ENCODE measurements at regions of chr12 and their contacts with region 1.

Region 1: DNA sequence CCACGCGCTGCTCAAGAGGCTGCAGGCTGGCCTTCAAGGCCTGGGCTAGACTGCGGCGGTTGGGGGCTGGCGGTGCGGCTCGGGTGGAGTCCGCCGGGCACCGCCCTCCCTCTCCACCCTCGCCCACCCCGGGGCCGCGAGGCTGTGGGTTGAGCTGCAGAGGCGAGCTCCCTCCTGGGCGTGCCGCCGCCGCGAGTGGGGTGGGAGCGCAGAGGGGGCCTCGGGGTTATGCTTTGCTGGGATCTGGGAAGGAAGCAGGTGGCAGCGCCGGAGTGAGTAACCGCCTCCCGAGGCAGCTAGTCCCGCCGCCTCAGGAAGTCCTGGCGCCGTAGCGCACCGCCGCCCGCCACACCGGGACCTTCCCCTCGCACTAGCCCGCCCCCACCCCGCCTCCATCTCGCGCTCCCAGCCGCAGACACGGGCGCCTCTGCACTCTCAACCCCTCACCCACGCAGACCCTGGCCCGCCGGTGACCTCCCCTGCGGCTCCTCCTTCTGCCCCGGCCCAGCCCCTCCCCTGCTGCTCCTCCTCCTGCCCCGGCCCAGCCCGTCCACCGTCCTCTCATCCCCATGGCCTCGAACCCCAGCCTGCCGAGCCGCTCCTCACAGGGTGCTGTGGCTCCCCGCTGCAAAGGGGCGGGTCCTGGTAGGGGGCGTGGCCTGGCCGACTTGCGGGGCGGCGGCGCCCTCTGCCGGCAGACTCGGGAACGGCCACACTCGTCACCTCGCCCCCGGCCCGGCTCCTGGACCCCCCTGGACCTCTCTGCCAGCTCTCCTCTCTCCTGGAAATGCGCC is 16.6 kb downstream of the TAMALIN start:
- DNase-seq: peak; percentile 89
- H3K4me3 ChIP-seq: peak overlapping the region; percentile 2 to 69 (median 43)
- H3K27ac ChIP-seq: peak overlapping the region; percentile 94
- H3K4me1 ChIP-seq: peaks cover 31% of the 10 kb centered on the region
- H3K27me3 ChIP-seq: no peaks in the 10 kb centered on the region
- CTCF ChIP-seq: peak; percentile 98 to 99
- POLR2A ChIP-seq: peak; percentile 39

Region 2: DNA sequence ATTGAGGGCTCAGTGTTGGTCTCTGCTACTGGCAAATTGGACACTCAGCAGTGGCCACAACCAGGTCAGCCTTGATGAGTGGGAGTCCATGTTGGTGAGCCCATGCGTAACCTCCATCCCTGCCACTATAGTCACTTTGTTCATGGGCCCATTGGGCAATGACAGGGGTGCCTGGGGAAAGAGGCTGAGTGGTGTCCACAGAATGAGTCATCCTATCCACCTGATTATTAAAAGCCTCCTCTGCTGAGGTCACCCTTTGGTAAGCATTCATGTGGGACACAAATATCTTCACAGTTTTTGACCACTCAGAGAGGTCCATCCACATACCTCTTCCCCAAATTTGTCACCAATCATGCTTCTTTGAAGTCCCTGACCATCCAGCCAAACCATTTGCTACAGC is 224.9 kb before region 1 on chr12:
- CTCF ChIA-PET with region 1: no interaction called
- POLR2A ChIA-PET with region 1: no interaction called
- dilution Hi-C with region 1: no loop called
- intact Hi-C with region 1: no loop called
- DNase-seq: no peak
- H3K4me3 ChIP-seq: no peak overlapping the region
- H3K27ac ChIP-seq: no peak overlapping the region
- H3K4me1 ChIP-seq: no peaks in the 10 kb centered on the region
- H3K27me3 ChIP-seq: no peaks in the 10 kb centered on the region
- CTCF ChIP-seq: no peak
- POLR2A ChIP-seq: no peak

Region 3: DNA sequence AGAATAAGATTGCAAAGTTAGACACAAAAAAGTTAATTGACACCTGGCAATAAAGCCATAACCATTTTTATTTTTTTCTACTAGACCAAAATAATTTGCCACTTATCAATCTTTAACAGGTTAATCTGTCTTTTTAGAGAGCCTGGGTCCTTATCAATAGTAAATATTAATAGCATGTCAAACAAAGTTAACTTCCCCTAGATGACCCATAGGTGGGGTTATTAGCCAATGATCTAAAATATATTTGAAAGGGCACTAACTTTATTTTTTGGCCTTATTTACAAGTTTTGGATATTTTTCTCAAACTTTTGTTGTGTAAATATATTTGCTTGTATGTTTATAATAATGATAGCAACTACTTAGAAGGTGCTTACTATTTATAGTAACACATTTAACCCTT is 131.5 kb before region 1 on chr12:
- CTCF ChIA-PET with region 1: interaction called, 32 read pairs
- POLR2A ChIA-PET with region 1: no interaction called
- dilution Hi-C with region 1: no loop called
- intact Hi-C with region 1: loop called (anchors 1 kb)
- DNase-seq: no peak
- H3K4me3 ChIP-seq: no peak overlapping the region
- H3K27ac ChIP-seq: no peak overlapping the region
- H3K4me1 ChIP-seq: peaks cover 35% of the 10 kb centered on the region
- H3K27me3 ChIP-seq: no peaks in the 10 kb centered on the region
- CTCF ChIP-seq: peak in 1 of 2 donors; percentile 23
- POLR2A ChIP-seq: no peak

Region 4: DNA sequence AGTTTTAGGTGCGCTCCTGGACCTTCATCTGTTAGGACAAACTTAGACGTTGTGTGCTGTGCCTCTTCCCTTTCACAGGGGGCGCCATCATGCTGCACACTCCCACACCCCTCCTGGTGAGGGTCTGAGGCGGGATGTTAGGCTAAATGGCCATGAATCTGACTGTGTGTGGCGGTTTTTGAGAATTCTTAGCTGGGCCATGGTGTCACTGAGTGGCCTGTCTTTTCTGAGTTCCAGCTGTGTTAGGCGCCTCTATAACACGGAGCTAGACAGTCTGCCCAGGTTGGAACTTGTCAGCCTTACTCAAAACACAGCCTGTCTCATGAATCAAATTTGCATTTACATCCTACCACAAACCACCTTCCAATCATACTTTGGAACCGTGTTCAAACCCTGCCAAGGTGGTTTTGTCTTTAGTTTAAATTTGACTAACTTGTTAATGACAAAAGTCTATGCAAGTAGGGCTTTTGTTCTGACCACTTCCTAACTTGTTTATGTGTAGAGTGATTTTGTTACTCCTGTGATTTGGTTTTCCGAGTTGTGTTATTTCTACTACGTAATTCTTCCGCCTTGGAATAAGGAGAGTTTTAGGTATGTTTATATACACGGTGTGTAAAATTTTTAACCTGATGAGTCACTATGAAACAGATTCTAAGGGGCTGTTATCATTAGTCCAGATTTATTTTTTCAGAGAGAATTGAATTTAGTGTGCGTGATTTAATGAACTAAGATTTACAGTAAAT is 52.3 kb before region 1 on chr12:
- CTCF ChIA-PET with region 1: interaction called, 4 read pairs
- POLR2A ChIA-PET with region 1: no interaction called
- dilution Hi-C with region 1: no loop called
- intact Hi-C with region 1: loop called (anchors 1 kb)
- DNase-seq: peak; percentile 89
- H3K4me3 ChIP-seq: peak overlapping the region in 1 of 3 experiments; percentile 3
- H3K27ac ChIP-seq: peak overlapping the region; percentile 98
- H3K4me1 ChIP-seq: peaks cover 70% of the 10 kb centered on the region
- H3K27me3 ChIP-seq: no peaks in the 10 kb centered on the region
- CTCF ChIP-seq: peak; percentile 82 to 85
- POLR2A ChIP-seq: no peak

Region 5: DNA sequence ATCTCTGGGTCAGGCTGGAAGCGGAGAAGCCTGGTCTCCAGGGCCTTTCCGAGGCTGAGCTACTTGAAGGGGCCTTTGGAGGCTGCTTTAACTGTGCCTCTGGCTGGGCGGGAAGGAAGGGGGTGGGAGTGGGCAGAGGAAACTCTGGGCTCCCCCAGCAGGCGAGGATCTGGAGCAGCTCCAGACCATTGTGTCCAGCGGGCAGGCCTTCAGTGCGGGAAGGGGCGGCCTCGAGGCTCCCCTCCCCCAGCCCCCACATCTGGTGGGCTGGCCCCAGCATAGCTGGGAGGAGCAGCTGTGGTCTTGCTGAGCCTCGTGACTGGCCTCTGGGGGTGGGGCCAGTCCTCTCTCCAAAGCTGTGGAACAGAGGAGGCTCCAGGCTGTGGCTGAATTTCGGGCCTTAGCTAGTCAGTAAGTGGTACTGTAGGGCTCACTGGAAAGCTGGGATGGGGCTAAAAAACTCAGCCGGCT is 13.2 kb before region 1 on chr12:
- CTCF ChIA-PET with region 1: interaction called, 946 read pairs
- POLR2A ChIA-PET with region 1: interaction called, 221 read pairs
- dilution Hi-C with region 1: no loop called
- intact Hi-C with region 1: loop called (anchors 1 kb)
- DNase-seq: peak; percentile 97
- H3K4me3 ChIP-seq: peak overlapping the region in 2 of 3 experiments; percentile 72 to 95
- H3K27ac ChIP-seq: peak overlapping the region; percentile 78
- H3K4me1 ChIP-seq: peaks cover 37% of the 10 kb centered on the region
- H3K27me3 ChIP-seq: no peaks in the 10 kb centered on the region
- CTCF ChIP-seq: no peak
- POLR2A ChIP-seq: peak; percentile 84

Region 6: GRCh38 chr12:52063981-52064649 is 40.7 kb after region 1 on chr12:
- CTCF ChIA-PET with region 1: interaction called, 156 read pairs
- POLR2A ChIA-PET with region 1: interaction called, 3 read pairs
- dilution Hi-C with region 1: no loop called
- intact Hi-C with region 1: loop called (anchors 1 kb)
- DNase-seq: peak; percentile 73
- H3K4me3 ChIP-seq: no peak overlapping the region
- H3K27ac ChIP-seq: peak overlapping the region; percentile 83
- H3K4me1 ChIP-seq: peaks cover 9% of the 10 kb centered on the region
- H3K27me3 ChIP-seq: no peaks in the 10 kb centered on the region
- CTCF ChIP-seq: no peak
- POLR2A ChIP-seq: no peak

Region 7: DNA sequence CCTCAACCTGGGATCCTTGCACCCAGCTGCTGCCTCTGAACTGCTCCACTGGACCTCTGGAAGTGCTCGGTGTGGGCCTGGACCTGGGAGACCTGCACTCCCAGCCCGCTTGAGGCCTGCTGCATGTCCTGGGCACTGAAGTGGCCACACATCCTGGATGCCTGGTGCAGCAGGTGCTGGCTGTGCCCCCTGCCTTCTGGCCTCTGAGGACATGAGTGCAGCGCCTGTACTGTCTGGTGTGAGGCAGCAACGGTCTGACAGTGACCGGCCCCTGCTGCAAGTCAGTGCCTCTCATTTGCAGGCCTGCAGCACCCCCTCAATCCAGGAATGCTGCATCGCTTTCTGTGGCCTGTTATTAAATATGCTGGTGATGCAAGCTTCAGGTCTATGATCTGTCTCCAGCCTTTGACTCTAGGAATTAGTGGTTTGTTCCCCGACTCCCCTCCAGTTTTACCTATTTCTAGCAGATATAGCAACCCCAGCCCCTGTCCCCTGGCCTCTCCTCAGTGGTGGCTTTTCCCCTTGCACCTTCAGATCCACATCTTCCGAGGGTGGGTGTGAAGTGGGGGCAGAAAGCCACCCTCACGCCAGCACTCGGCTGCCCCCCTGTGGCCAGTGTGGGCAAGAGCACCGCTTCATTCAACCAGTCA is 59.7 kb after region 1 on chr12:
- CTCF ChIA-PET with region 1: interaction called, 452 read pairs
- POLR2A ChIA-PET with region 1: interaction called, 3 read pairs
- dilution Hi-C with region 1: no loop called
- intact Hi-C with region 1: loop called (anchors 1 kb)
- DNase-seq: peak; percentile 64
- H3K4me3 ChIP-seq: no peak overlapping the region
- H3K27ac ChIP-seq: no peak overlapping the region
- H3K4me1 ChIP-seq: peaks cover 5% of the 10 kb centered on the region
- H3K27me3 ChIP-seq: no peaks in the 10 kb centered on the region
- CTCF ChIP-seq: peak; percentile 96 to 98
- POLR2A ChIP-seq: no peak

Region 8: DNA sequence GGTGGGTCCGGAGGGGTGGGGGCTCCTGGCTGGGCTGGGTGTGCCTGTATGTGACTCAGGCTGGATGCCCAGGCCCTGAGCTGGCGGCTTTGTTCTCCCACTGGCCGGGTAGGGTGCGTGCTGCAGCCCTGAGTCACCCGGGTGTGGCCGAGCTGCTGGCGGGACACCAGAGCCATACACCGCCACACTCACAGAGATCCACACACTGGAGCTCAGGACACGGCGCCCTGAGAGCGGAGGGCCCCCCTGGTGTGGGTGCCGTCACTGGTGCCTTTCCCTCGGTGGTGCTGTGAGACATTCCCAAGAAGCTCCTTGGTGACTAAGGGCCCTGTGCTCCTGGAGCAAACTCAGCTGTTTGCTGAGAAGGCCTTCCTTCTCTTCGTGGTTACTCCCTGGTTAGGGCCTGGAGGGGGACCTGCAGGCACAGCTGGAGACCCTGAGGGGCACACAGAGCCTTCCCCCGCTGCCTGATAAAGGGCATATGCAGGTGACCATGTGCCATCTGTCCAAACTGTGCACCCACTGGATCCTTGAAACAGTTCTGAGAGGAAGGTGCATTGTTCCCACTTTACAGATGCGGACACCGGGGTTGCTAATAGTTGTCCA is 124.1 kb after region 1 on chr12:
- CTCF ChIA-PET with region 1: interaction called, 23 read pairs
- POLR2A ChIA-PET with region 1: interaction called, 3 read pairs
- dilution Hi-C with region 1: no loop called
- intact Hi-C with region 1: no loop called
- DNase-seq: peak; percentile 91
- H3K4me3 ChIP-seq: no peak overlapping the region
- H3K27ac ChIP-seq: peak overlapping the region; percentile 98
- H3K4me1 ChIP-seq: peaks cover 23% of the 10 kb centered on the region
- H3K27me3 ChIP-seq: no peaks in the 10 kb centered on the region
- CTCF ChIP-seq: no peak
- POLR2A ChIP-seq: peak; percentile 65

Measured in endothelial cell of umbilical vein (primary cell).